A549 (cell line): ENCODE measurements at regions of chr17 and their contacts with region 1.

Region 1: DNA sequence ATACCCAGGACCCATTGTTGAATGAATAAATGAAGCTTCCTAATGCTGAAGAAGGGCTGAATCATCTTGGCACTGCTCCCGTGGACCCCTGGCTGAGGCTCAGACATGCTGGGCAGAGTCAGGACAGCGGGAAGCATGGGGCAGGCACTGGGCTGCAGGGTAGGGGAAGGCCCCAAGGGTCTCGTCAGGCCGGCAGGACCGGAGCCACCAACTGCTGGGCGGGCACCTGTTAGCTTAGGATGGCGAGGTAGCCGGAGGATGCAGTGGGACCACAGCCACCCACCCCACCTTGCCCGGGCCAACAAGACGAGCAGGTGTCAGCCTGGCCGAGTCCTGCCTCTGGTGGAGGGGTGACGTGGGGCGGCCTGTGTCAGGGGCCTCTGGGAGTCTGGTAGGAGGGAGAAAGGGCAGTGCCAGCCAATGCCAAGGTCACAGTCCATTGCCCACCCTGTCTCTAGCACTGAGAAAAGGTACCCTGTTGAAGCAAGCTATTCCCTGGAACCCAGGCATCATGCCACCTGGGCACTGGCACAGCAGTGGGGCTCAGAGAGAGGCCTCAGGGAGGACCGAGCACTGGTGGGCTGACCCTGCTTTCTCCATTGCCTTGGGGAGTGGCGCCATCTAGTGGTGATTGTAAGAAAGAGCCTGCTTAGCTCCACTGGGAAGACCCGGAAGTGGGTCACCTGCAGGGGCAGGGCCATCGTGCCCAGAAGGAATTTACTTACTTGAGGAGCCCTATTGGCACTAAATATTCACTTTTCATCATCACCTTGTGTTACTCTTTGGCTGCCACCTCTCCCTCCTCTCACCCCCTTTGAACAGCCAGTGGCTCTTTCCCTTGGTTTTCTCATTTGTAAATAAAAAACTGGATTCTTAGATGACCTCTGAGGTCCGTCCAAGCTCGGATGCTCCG is 3.0 kb upstream of the DLX3 start:
- DNase-seq: peak; percentile 92 to 95
- ATAC-seq: peak; percentile 73 to 88
- H3K4me3 ChIP-seq: no peak overlapping the region
- H3K27ac ChIP-seq: peak overlapping the region; percentile 54 to 71
- H3K4me1 ChIP-seq: peaks cover 29% of the 10 kb centered on the region
- CTCF ChIP-seq: peak; percentile 99
- EP300 ChIP-seq: no peak
- POLR2A ChIP-seq: no peak
- RAD21 ChIP-seq: peak; percentile 99

Region 2: GRCh38 chr17:49694847-49695683 is 303.0 kb before region 1 on chr17:
- CTCF ChIA-PET with region 1: interaction called, 94 read pairs
- POLR2A ChIA-PET with region 1: no interaction called
- DNase-seq: peak; percentile 33 to 58
- ATAC-seq: peak; percentile 36 to 64; a peak in 4 of 6 replicates
- H3K4me3 ChIP-seq: no peak overlapping the region
- H3K27ac ChIP-seq: no peak overlapping the region
- H3K4me1 ChIP-seq: no peaks in the 10 kb centered on the region
- CTCF ChIP-seq: peak; percentile 98
- EP300 ChIP-seq: no peak
- POLR2A ChIP-seq: no peak
- RAD21 ChIP-seq: peak; percentile 98

Region 3: GRCh38 chr17:49815761-49816281 is 182.2 kb before region 1 on chr17:
- CTCF ChIA-PET with region 1: interaction called, 29 read pairs
- POLR2A ChIA-PET with region 1: no interaction called
- DNase-seq: no peak
- ATAC-seq: no peak
- H3K4me3 ChIP-seq: no peak overlapping the region
- H3K27ac ChIP-seq: no peak overlapping the region
- H3K4me1 ChIP-seq: no peaks in the 10 kb centered on the region
- CTCF ChIP-seq: no peak
- EP300 ChIP-seq: no peak
- POLR2A ChIP-seq: no peak
- RAD21 ChIP-seq: no peak

Region 4: DNA sequence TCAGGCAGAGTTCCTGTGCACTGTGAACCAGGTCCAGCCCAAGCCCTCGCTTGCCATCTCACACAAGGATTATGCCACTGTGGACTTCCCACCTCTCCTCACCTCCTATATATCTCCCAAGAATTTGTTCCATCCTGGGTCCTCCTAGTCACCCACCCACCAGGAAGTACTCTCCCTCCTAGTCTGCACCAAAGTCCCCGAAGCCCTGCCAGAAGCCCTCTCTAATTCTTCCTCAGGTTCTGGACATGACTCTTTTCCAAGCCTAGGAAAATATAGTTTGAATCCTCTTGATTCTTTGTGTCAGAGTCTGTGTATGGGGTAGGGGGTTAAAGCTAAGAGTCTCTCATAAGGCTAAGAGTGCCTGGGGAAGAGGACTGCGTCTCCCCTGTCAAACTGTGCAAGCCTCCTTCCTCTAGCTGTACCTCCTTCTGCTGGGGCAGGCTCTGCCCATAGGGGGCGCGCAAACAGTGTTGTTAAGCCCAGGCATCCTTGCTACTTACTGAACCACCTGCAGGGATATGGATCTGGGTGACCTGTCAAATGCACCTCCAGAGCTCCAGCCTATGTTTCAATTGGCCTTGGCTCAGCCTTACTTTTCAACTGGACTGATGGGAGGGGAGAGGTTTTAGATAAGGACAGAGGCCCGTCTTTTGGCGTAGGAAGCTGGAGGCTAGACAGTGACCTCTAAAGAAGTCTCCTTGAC is 45.7 kb before region 1 on chr17:
- CTCF ChIA-PET with region 1: interaction called, 2,613 read pairs
- POLR2A ChIA-PET with region 1: no interaction called
- DNase-seq: peak; percentile 85 to 98
- ATAC-seq: peak; percentile 94 to 98
- H3K4me3 ChIP-seq: no peak overlapping the region
- H3K27ac ChIP-seq: no peak overlapping the region
- H3K4me1 ChIP-seq: peaks cover 5% of the 10 kb centered on the region; the same call in 1 of the 3 replicates
- CTCF ChIP-seq: peak; percentile 91
- EP300 ChIP-seq: no peak
- POLR2A ChIP-seq: no peak
- RAD21 ChIP-seq: peak; percentile 74 to 85

Region 5: DNA sequence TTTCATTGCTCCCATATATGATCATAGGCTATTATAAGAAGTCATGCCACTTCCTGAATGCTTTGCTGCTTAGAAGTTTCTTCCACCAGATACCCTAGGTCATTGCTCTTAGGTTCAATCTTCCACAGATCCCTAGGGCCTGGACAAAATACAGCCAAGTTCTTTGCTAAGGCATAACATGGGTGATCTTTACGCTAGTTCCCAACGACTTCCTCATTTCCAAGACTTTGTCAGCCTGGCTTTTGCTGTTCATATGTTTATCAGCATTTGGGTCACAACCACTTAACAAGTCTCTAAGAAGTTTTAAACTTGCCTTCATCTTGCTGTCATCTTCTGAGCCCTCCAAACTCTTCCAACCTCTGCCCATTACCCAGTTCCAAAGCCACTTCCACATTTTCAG is 17.1 kb after region 1 on chr17:
- CTCF ChIA-PET with region 1: interaction called, 56 read pairs
- POLR2A ChIA-PET with region 1: no interaction called
- DNase-seq: no peak
- ATAC-seq: no peak
- H3K4me3 ChIP-seq: no peak overlapping the region
- H3K27ac ChIP-seq: no peak overlapping the region
- H3K4me1 ChIP-seq: no peaks in the 10 kb centered on the region
- CTCF ChIP-seq: no peak
- EP300 ChIP-seq: no peak
- POLR2A ChIP-seq: no peak
- RAD21 ChIP-seq: no peak

Region 6: DNA sequence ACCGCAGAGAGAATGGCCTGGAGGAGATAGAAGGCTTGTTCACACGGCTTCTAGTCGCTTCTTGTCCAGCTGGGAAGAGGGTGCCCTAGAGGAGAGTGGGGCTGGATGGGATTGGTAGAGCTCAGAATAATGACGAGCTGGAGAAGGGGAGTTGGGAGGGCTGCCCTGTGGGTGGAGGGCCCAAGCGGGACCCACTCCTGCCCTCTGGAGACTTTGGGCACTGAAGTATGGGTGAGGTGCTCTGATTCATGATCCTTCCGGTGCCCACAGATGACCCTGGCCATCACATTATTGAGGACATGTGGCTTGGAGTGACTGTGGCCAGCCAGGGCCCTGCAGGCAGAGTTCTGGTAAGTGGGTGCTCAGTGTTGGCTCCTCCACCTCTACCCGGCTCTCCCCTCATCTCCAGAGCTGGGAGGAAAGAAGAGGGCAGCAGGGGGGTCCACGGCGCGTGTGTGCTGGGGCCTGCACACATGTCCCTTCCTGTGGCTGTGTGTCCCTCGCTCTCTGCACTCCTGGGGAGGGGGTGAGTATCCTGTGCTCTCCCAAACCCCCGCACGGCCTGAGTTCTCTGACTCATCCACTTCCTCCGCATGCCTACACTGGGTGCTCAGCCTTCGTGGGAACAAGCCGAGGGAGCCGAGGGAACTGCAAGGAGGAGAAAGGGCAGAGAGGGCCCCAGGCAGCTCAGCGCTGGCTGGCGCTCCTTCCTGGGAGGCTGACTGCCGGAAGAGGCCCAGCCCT is 66.4 kb after region 1 on chr17:
- CTCF ChIA-PET with region 1: interaction called, 21 read pairs
- POLR2A ChIA-PET with region 1: interaction called, 4 read pairs
- DNase-seq: peak; percentile 94
- ATAC-seq: peak; percentile 51 to 71
- H3K4me3 ChIP-seq: peak overlapping the region; percentile 10; the same call in 1 of the 3 replicates
- H3K27ac ChIP-seq: peak overlapping the region; percentile 92 to 97
- H3K4me1 ChIP-seq: peaks cover 79% of the 10 kb centered on the region
- CTCF ChIP-seq: no peak
- EP300 ChIP-seq: peak; percentile 54 to 80; a peak in 3 of 5 replicates
- POLR2A ChIP-seq: no peak
- RAD21 ChIP-seq: peak in 1 of 2 experiments; percentile 43; a peak in 2 of 5 replicates